ENCODE measurements at regions of chr1 and their contacts with region 1.

Region 1: DNA sequence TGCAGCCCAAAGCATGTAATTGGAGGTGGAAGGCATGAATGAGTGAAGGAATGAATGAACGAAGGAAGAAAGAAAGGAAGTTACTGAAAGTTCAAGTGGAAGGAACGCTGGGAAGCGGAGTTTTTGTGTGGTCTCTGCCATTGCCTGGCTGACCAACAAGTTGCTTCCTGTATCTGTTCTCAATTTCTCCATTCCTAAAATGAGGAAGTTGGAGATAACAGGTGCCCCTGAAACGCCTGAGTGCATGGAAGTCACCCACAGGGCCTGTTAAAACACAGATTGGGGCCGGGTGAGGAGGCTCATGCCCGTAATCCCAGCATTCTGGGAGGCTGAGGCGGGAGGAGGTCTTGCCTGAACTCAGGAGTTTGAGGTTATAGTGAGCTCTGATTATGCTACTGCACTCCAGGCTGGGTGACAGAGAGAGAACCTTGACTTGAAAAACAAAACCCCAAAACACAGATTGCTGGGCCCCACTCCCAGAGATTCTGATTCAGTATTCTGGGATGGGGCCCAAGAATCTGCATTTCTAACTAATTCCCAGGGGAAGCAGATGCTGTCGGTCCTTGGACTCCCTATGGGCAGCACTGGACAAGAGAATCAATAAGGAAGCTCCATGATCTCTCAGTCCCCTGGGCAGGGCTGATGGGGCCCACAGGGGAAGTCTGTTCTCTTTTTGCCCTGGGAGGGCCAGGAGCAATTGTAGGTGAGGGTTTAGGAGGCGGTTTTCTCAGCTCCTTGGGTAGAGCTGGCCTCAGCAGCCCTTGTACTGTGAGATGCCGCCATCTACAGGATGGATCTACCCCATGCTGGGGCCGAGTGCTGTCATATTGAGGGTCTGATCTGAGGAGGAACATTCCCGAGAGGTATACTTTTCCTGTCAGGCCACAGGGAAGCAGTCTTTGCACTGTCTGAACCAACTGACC is 3.3 kb upstream of the CNR2 start:
- DNase-seq: peak; percentile 81
- H3K4me3 ChIP-seq: no peak overlapping the region
- H3K27ac ChIP-seq: peak overlapping the region in 3 of 4 donors; percentile 19 to 32 (median 31)
- H3K4me1 ChIP-seq: peaks cover 9 to 52% (median 22%) of the 10 kb centered on the region in 4 donors
- H3K27me3 ChIP-seq: no peaks in the 10 kb centered on the region
- CTCF ChIP-seq: peak; percentile 64 to 76 (median 67)
- EP300 ChIP-seq: no peak
- POLR2A ChIP-seq: no peak

Region 2: GRCh38 chr1:22171966-22172670 is 1744.4 kb before region 1 on chr1:
- in situ Hi-C with region 1: no loop called
- intact Hi-C with region 1: no loop called
- DNase-seq: no peak
- H3K4me3 ChIP-seq: no peak overlapping the region
- H3K27ac ChIP-seq: no peak overlapping the region
- H3K4me1 ChIP-seq: no peaks in the 10 kb centered on the region
- H3K27me3 ChIP-seq: no peaks in the 10 kb centered on the region
- CTCF ChIP-seq: no peak
- EP300 ChIP-seq: no peak
- POLR2A ChIP-seq: no peak

Region 3: GRCh38 chr1:23777979-23778814 is 138.3 kb before region 1 on chr1 and contains the start of gene PITHD1:
- in situ Hi-C with region 1: loop called in 1 of 4 experiments (anchors 10 kb)
- intact Hi-C with region 1: no loop called
- DNase-seq: peak; percentile 88
- H3K4me3 ChIP-seq: peak within 1 kb of the TSS; percentile 75 to 100 (median 84)
- H3K27ac ChIP-seq: peak within 1 kb of the TSS; percentile 86 to 99 (median 92)
- H3K4me1 ChIP-seq: peaks cover 15 to 30% (median 21%) of the 10 kb centered on the region in 4 donors
- H3K27me3 ChIP-seq: no peaks in the 10 kb centered on the region
- CTCF ChIP-seq: no peak
- EP300 ChIP-seq: no peak
- POLR2A ChIP-seq: peak; percentile 70
- total RNA-seq, gene PITHD1: 36.7 to 40.6 (median 38.9) TPM